K562 (cell line): ENCODE measurements at regions of chr15 and their contacts with region 1.

Region 1: DNA sequence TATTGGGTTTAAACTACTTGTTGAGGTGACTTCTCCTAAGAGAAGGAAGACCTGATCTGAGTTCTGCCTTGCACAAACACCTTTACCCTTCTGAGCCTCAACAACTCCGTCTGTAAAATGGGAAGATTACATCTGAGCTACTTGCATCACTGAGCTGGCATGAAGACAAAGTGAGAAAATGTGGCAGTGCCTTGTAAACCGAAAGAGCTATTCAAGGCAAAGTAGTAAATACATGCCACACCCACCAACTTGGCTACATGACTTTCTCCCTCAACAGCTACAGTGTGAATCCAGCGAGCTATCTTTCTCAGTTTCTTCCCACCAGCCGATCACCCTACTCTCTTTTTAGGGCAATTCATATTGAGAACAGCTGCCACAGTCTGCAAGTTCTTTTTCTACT is 148.3 kb downstream of the FOXB1 start:
- DNase-seq: no peak
- ATAC-seq: no peak
- H3K4me3 ChIP-seq: no peak overlapping the region
- H3K27ac ChIP-seq: no peak overlapping the region
- H3K4me1 ChIP-seq: no peaks in the 10 kb centered on the region
- H3K27me3 ChIP-seq: no peaks in the 10 kb centered on the region; a peak in 2 of 5 replicates
- CTCF ChIP-seq: no peak
- EP300 ChIP-seq: no peak
- POLR2A ChIP-seq: no peak
- RAD21 ChIP-seq: no peak

Region 2: GRCh38 chr15:60121845-60122244 is 30.5 kb before region 1 on chr15:
- CTCF ChIA-PET with region 1: no interaction called
- POLR2A ChIA-PET with region 1: no interaction called
- in situ Hi-C with region 1: no loop called
- intact Hi-C with region 1: no loop called
- DNase-seq: no peak
- ATAC-seq: no peak
- H3K4me3 ChIP-seq: no peak overlapping the region
- H3K27ac ChIP-seq: no peak overlapping the region
- H3K4me1 ChIP-seq: no peaks in the 10 kb centered on the region
- H3K27me3 ChIP-seq: no peaks in the 10 kb centered on the region; a peak in 2 of 5 replicates
- CTCF ChIP-seq: no peak
- EP300 ChIP-seq: no peak
- POLR2A ChIP-seq: no peak
- RAD21 ChIP-seq: no peak

Region 3: GRCh38 chr15:60137711-60138396 is 14.5 kb before region 1 on chr15:
- CTCF ChIA-PET with region 1: no interaction called
- POLR2A ChIA-PET with region 1: interaction called, 10 read pairs
- in situ Hi-C with region 1: no loop called
- intact Hi-C with region 1: no loop called
- DNase-seq: no peak
- ATAC-seq: no peak
- H3K4me3 ChIP-seq: no peak overlapping the region
- H3K27ac ChIP-seq: no peak overlapping the region
- H3K4me1 ChIP-seq: no peaks in the 10 kb centered on the region
- H3K27me3 ChIP-seq: no peaks in the 10 kb centered on the region; a peak in 2 of 5 replicates
- CTCF ChIP-seq: no peak
- EP300 ChIP-seq: no peak
- POLR2A ChIP-seq: no peak
- RAD21 ChIP-seq: no peak